Esophagus muscularis mucosa (tissue), 4 donors: ENCODE measurements at regions of chr12 and their contacts with region 1.

Region 1: DNA sequence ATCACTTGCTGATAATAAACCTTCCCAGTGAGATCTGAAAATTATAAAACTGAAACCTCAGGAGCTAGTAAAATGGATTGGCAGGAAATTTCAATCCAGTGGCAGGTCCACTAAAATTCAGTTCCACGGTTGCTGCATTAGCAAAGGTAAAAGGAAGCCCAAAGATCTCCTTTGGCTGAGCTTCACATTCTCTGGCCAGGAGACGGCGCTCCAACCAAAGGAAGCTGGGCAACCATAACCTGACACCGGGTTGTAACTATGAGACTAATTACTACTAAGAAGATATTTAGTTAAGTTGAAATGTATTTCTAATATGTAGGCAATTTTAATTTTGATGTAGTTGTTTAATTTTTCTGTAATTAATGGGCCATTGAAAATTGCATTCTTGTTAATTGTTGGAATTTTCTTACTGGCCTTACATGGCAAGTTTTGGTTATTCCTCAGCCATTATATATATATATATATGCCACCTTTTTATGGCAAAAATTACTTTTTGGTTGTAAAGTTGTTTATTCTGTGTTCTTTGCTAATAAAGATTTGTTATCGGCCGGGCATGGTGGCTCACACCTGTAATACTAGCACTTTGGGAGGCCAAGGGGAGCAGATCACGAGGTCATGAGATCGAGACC is 17.0 kb downstream of the OR8S1 start:
- DNase-seq: no peak
- H3K4me3 ChIP-seq: no peak overlapping the region
- H3K27ac ChIP-seq: no peak overlapping the region
- H3K4me1 ChIP-seq: no peaks in the 10 kb centered on the region
- H3K27me3 ChIP-seq: peaks cover 0 to 7% (median 0%) of the 10 kb centered on the region in 4 donors
- CTCF ChIP-seq: peak; percentile 39 to 54 (median 43)
- EP300 ChIP-seq: no peak
- POLR2A ChIP-seq: no peak

Region 2: GRCh38 chr12:48618541-48618940 is 76.1 kb after region 1 on chr12:
- intact Hi-C with region 1: loop called (anchors 5 kb)
- DNase-seq: peak; percentile 93
- H3K4me3 ChIP-seq: no peak overlapping the region
- H3K27ac ChIP-seq: no peak overlapping the region
- H3K4me1 ChIP-seq: no peaks in the 10 kb centered on the region
- H3K27me3 ChIP-seq: peaks cover 0 to 25% (median 0%) of the 10 kb centered on the region in 4 donors
- CTCF ChIP-seq: peak; percentile 85 to 97 (median 95)
- EP300 ChIP-seq: no peak
- POLR2A ChIP-seq: no peak